BJ (cell line): ENCODE measurements at regions of chr12 and their contacts with region 1.

Region 1: DNA sequence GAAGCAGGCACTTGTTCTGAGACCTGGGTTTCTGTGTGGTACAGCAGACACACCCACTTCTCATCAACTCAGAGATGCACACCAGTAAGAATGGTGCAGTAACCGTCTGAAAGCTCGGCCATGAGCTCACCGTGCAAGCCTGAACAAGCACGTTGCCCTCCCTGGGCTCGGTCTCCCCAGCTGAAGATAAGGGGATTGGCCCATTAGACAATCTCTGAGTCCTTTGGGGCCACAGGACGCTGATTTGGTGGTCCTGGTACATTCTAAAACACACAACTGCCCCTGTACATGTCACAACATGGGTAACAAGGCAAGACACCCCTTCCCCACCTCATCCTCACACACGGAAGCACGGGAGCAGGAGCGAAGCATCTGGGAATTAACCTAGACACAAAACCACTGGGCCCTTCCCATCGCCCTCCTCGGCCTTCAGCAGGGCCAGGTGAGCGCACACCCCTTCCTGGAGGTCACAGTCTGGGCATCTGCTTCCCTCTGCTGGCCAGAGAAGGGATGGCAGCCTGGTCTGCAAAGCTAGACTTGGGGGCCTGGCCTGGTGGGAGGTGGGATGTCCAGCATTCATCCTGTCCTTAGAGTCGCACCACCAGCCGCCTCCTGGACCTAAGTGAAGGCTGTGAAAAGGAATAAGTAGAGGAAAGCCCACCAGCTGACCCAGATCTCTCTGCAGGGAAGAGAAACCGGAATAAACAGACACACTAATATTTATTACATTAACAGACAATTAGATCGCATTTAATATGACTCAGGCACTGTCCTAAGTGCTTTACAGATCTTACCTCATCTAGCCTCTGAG is 18.9 kb upstream of the SMUG1 start:
- DNase-seq: no peak
- H3K4me3 ChIP-seq: no peak overlapping the region
- H3K27me3 ChIP-seq: peaks cover 14% of the 10 kb centered on the region
- CTCF ChIP-seq: peak; percentile 98

Region 2: GRCh38 chr12:53984901-53985709 is 222.6 kb before region 1 on chr12 and contains the start of gene HOXC10:
- CTCF ChIA-PET with region 1: interaction called, 90 read pairs
- POLR2A ChIA-PET with region 1: no interaction called
- DNase-seq: no peak
- H3K4me3 ChIP-seq: peak within 1 kb of the TSS; percentile 60
- H3K27me3 ChIP-seq: peaks cover 2% of the 10 kb centered on the region; the same call in 1 of the 2 replicates
- CTCF ChIP-seq: peak; percentile 83
- polyA plus RNA-seq, gene HOXC10: 13.9 and 14.9 TPM in 2 replicates

Region 3: GRCh38 chr12:54017878-54018467 is 189.7 kb before region 1 on chr12:
- CTCF ChIA-PET with region 1: interaction called, 200 read pairs
- POLR2A ChIA-PET with region 1: no interaction called
- DNase-seq: no peak
- H3K4me3 ChIP-seq: peak overlapping the region; percentile 72
- H3K27me3 ChIP-seq: peaks cover 13% of the 10 kb centered on the region
- CTCF ChIP-seq: no peak